ENCODE measurements at regions of chr16 and their contacts with region 1.

Region 1: GRCh38 chr16:82263521-82264143 is 93.6 kb upstream of the MPHOSPH6 start:
- DNase-seq: peak; percentile 46
- ATAC-seq: peak; percentile 89 to 92

Region 2: DNA sequence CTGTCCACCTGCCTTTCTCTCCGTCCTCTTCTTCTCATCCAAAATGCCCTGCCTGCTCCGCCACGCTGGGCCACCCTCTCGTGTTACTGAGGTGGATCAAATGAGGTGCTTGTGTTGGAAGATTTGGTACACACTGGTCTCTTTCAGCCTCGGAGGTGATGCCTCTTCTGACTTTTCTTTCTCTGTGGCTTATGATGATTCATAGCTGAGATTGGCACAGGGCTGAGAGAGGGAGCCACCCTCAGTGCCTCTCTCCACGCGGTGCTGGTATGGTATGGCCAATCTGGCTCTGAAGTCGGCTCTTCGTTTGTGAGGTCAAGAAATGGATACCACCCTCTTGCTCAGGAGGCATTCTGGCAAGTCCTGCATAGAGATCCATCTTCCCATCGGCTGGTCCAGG is 402.1 kb before region 1 on chr16:
- intact Hi-C with region 1: no loop called
- DNase-seq: no peak
- ATAC-seq: peak in 1 of 2 donors; percentile 42

Region 3: GRCh38 chr16:82219298-82219697 is 44.3 kb before region 1 on chr16:
- intact Hi-C with region 1: no loop called
- DNase-seq: no peak
- ATAC-seq: no peak

Region 4: GRCh38 chr16:82344157-82344556 is 80.5 kb after region 1 on chr16:
- intact Hi-C with region 1: loop called (anchors 1 to 2 kb)
- DNase-seq: no peak
- ATAC-seq: peak; percentile 68 to 78

Region 5: GRCh38 chr16:82456683-82457082 is 193.1 kb after region 1 on chr16:
- intact Hi-C with region 1: loop called in 1 of 2 experiments (anchors 10 kb)
- DNase-seq: peak; percentile 51
- ATAC-seq: peak; percentile 80 to 89

Measured in left cardiac atrium (tissue), 4 donors.